Heart left ventricle (tissue), 16 donors: ENCODE measurements at regions of chr1 and their contacts with region 1.

Region 1: GRCh38 chr1:221637641-221638041 is 104.2 kb downstream of the DUSP10 start:
- DNase-seq: peak in 3 of 5 donors; percentile 11 to 49 (median 29)
- ATAC-seq: peak in 3 of 4 donors; percentile 63 to 72 (median 68)
- H3K4me3 ChIP-seq: no peak overlapping the region
- H3K27ac ChIP-seq: no peak overlapping the region
- H3K4me1 ChIP-seq: peaks cover 0 to 14% (median 0%) of the 10 kb centered on the region in 12 donors
- H3K27me3 ChIP-seq: peaks cover 0 to 5% (median 0%) of the 10 kb centered on the region in 9 donors
- CTCF ChIP-seq: peak in 3 of 12 donors; percentile 19 to 31 (median 23)
- POLR2A ChIP-seq: no peak

Region 2: DNA sequence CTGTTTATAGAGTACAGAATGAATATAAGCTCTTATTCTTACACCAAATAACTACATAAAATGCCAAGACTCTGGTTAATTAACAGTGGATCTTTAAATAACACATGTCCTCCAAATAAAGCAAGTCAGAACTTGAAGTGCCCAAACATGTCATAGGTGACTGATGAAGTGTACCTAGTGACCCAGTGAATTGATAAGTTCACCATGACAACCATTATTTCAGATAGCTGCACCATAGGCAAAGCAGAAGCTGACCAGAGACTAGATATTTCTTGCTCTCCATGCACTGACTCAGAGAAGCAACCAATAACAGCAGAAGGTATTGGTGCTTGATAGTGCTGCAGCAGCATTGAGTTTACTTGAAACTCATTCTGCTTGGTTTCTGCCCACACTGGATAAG is 87.8 kb before region 1 on chr1:
- intact Hi-C with region 1: loop called in 1 of 10 experiments (anchors 5 kb)
- DNase-seq: no peak
- ATAC-seq: no peak
- H3K4me3 ChIP-seq: no peak overlapping the region
- H3K27ac ChIP-seq: no peak overlapping the region
- H3K4me1 ChIP-seq: no peaks in the 10 kb centered on the region
- H3K27me3 ChIP-seq: no peaks in the 10 kb centered on the region
- CTCF ChIP-seq: no peak
- POLR2A ChIP-seq: no peak